Aorta (tissue), 5 donors: ENCODE measurements at regions of chrX and their contacts with region 1.

Region 1: DNA sequence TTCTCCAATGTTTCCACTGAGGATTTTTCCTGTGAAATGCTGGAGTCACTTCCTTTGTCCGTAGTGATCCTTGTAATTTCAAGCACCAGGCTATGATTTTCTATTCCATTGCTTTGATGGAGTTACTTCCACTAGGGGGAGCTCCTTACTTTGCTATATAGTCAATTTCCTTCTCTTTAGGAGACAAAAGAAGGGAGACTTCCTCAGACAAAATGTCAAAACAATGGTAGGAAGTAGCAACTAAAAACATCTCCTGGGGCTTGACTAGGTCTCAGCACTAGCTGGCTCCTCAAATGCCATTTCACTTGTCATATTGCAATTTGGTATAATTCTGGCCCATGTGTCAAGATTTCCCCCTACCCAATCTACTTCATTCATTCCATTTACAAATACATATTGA is 24.1 kb downstream of the ZCCHC12 start:
- DNase-seq: no peak
- ATAC-seq: peak; percentile 62
- H3K4me3 ChIP-seq: no peak overlapping the region
- H3K27ac ChIP-seq: no peak overlapping the region
- H3K4me1 ChIP-seq: no peaks in the 10 kb centered on the region
- H3K27me3 ChIP-seq: no peaks in the 10 kb centered on the region

Region 2: GRCh38 chrX:118904218-118904617 is 56.5 kb after region 1 on chrX:
- intact Hi-C with region 1: no loop called
- DNase-seq: no peak
- ATAC-seq: no peak
- H3K4me3 ChIP-seq: no peak overlapping the region
- H3K27ac ChIP-seq: no peak overlapping the region
- H3K4me1 ChIP-seq: no peaks in the 10 kb centered on the region
- H3K27me3 ChIP-seq: no peaks in the 10 kb centered on the region

Region 3: GRCh38 chrX:118974088-118974907 is 126.6 kb after region 1 on chrX and contains the start of gene LONRF3:
- intact Hi-C with region 1: loop called (anchors 10 kb)
- DNase-seq: peak; percentile 84 to 92
- ATAC-seq: peak; percentile 77
- H3K4me3 ChIP-seq: peak within 1 kb of the TSS; percentile 1 to 37
- H3K27ac ChIP-seq: peak within 1 kb of the TSS in 1 of 2 donors; percentile 19
- H3K4me1 ChIP-seq: no peaks in the 10 kb centered on the region
- H3K27me3 ChIP-seq: no peaks in the 10 kb centered on the region
- total RNA-seq, gene LONRF3: 4.7 to 8.4 TPM

Region 4: DNA sequence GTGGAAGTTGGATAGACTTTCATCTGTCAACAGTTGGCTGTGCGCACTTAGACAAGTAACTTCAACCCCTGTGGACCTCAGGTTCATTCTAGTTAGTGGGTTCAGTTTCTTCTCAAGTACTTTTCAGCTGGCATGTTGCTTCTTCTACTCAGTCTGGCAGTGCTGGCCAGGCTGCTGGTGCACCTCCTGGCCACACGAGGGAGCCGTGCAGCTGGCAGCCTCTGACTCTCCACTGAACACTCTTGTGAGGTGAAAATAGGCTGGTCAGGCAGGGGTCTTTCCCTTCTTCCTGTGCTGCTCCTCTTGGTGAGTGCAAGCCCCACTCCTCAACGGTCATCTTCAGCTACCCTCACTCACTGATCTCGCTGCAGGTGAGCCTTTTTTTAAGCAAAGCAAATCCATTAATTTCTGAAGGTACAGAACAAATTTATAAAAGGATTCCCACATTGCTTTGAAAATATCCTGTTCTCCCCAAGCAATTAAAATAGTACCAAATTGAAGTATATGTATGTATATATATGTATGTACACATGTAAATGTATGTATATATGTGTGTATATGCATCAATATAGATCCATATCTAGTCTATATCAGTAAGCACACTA is 157.3 kb after region 1 on chrX:
- intact Hi-C with region 1: loop called (anchors 2 to 5 kb)
- DNase-seq: peak; percentile 55 to 81
- ATAC-seq: peak; percentile 75
- H3K4me3 ChIP-seq: no peak overlapping the region
- H3K27ac ChIP-seq: no peak overlapping the region
- H3K4me1 ChIP-seq: no peaks in the 10 kb centered on the region
- H3K27me3 ChIP-seq: no peaks in the 10 kb centered on the region

Region 5: DNA sequence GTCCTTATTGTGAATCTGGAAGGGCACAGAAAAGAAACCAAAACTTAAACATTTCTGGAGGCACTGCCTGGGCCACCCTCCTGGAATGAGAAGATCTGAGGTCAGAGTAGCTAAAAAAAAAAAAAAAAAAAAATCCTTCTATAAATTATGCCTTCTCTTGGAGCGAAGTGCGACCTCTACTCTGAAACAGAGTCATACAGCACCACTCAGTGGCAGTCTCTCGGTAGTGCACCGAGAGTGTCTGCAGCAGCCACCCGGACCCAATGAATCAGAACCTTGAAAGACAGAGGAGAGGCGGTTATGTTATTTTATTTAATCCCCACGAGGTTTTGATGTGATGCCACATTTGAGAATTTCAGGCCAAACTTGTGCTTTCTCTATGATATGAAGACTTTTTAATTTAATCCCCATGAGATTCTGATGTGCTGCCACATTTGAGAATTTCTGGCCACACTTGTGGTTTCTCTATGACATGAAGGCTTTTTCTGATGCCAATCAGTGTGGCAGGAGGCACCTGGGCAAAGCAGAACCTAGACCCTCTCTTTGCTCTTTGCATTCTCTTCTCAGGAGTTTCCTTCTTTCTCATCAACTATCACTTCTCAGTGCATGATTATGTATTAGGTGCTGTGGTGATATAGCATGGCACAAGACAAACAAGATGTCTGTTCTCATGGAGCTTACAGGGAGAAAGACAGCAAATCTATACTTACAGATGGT is 219.5 kb after region 1 on chrX:
- intact Hi-C with region 1: loop called (anchors 2 to 5 kb)
- DNase-seq: peak; percentile 66 to 84
- ATAC-seq: peak; percentile 75
- H3K4me3 ChIP-seq: no peak overlapping the region
- H3K27ac ChIP-seq: no peak overlapping the region
- H3K4me1 ChIP-seq: no peaks in the 10 kb centered on the region
- H3K27me3 ChIP-seq: no peaks in the 10 kb centered on the region